ENCODE measurements at regions of chr14 and their contacts with region 1.

Region 1: DNA sequence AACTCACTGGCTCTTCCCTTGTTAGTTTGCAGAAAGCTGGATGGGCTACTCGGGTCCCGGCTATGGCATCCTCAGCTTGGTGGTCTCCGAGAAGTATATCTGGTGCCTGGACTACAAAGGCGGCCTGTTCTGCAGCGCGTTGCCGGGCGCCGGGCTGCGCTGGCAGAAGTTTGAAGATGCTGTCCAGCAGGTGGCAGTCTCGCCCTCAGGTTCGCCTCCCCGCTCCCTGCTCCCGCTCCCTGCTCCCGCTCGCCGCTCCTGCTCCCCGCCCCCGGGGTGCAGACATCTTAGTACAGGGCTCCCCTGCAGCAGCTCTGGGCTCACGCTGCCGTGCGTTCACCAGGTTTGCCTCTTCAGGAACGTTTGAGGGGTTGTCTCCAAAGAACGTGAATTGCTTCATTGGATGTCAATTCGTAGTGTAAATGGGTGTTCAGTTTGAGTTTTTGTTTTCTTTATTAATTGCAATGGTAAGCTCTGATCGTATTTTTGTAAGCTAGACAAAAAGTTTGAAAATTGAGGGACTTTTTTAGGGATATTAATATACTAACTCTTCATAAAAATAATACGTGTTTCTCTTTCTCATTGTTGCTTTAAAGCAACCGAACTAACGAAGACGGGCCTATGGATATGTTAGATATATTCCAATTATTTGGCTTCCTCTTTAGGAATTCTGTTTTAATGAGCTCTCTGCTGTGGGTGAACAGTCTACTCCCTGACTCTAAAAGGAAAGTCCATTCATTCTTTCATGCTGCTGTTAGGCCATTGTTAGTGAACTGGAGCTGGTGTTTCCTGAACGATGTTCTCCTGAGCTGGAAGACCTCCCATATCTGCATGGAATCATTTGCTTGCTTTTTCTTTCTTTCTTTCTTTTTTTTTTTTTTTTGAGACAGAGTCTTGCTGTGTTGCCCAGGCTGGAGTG is 71.3 kb downstream of the ANKRD9 start:
- DNase-seq: peak; percentile 16 to 72 (median 49)
- ATAC-seq: peak; percentile 95
- H3K4me3 ChIP-seq: no peak overlapping the region
- H3K4me3 Mint-ChIP-seq: peak overlapping the region in 1 of 10 donors; percentile 68
- H3K27ac ChIP-seq: no peak overlapping the region
- H3K27ac Mint-ChIP-seq: no peak overlapping the region
- H3K4me1 ChIP-seq: peaks cover 0 to 5% of the 10 kb centered on the region in 2 donors
- H3K4me1 Mint-ChIP-seq: peaks cover 0 to 8% (median 0%) of the 10 kb centered on the region in 7 donors
- H3K27me3 ChIP-seq: no peaks in the 10 kb centered on the region
- H3K27me3 Mint-ChIP-seq: no peaks in the 10 kb centered on the region

Region 2: GRCh38 chr14:102485696-102486488 is 47.6 kb after region 1 on chr14:
- CTCF ChIA-PET with region 1: no interaction called
- POLR2A ChIA-PET with region 1: no interaction called
- intact Hi-C with region 1: no loop called
- DNase-seq: no peak
- ATAC-seq: no peak
- H3K4me3 ChIP-seq: no peak overlapping the region
- H3K4me3 Mint-ChIP-seq: no peak overlapping the region
- H3K27ac ChIP-seq: no peak overlapping the region
- H3K27ac Mint-ChIP-seq: no peak overlapping the region
- H3K4me1 ChIP-seq: no peaks in the 10 kb centered on the region
- H3K4me1 Mint-ChIP-seq: peaks cover 0 to 3% (median 0%) of the 10 kb centered on the region in 7 donors
- H3K27me3 ChIP-seq: no peaks in the 10 kb centered on the region
- H3K27me3 Mint-ChIP-seq: no peaks in the 10 kb centered on the region

Region 3: DNA sequence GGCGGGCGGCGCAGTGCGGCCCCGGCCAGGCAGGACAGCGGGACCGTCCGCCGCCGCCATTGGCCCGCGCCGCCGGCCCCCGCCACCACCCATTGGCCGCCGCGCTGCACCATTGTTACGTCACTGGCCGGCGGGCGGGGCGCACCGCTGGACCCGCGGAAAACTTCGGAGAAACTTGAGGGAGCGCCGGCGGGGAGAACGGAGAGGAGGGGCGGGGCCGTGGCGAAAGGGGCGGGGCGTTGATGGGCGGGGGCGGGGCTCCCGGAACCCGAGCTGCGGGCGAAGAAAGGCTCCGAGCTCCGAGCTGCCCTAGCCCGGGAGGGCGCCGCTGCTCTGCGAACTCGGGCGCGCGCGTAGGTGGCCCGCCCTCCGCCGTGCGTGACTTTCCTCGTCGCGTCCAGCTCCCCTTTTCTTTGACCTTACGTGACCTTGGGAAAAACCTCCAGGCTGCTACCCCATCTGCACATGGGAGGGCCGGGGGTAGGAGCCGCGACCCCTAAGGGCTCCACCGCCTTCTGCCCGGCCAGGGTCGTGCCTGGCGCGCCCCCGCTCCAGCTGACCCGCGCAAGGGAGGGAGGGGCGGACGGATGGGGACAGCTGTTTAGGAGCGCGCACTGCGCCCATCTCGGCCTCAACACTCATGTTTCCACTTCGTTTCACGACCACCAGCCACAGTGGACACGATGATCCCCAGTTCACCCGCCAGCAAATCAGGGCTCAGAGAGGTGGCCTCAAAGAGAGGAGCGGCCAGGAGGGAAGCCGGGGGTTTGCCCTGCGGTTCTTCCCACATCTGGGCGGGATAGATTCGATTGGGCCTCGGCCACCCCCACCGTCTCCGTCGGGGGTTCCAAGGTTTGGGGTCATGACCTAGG is 71.7 kb after region 1 on chr14 and contains the start of gene ANKRD9:
- CTCF ChIA-PET with region 1: interaction called, 5 read pairs
- POLR2A ChIA-PET with region 1: interaction called, 7 read pairs
- intact Hi-C with region 1: loop called in 1 of 2 experiments (anchors 2 kb)
- DNase-seq: peak; percentile 48 to 94 (median 66)
- ATAC-seq: peak; percentile 83
- H3K4me3 ChIP-seq: peak within 1 kb of the TSS; percentile 75
- H3K4me3 Mint-ChIP-seq: peak within 1 kb of the TSS; percentile 85 to 91 (median 88)
- H3K27ac ChIP-seq: peak within 1 kb of the TSS; percentile 58
- H3K27ac Mint-ChIP-seq: peak within 1 kb of the TSS in 8 of 9 donors; percentile 20 to 74 (median 59)
- H3K4me1 ChIP-seq: peaks cover 4 to 14% of the 10 kb centered on the region in 2 donors
- H3K4me1 Mint-ChIP-seq: peaks cover 0 to 21% (median 10%) of the 10 kb centered on the region in 7 donors
- H3K27me3 ChIP-seq: no peaks in the 10 kb centered on the region
- H3K27me3 Mint-ChIP-seq: peaks cover 0 to 3% (median 0%) of the 10 kb centered on the region in 5 donors
- total RNA-seq, gene ANKRD9: 1.1 to 8.1 (median 2.2) TPM

Measured in naive thymus-derived CD4-positive, alpha-beta T cell (primary cell).